H1 (cell line): ENCODE measurements at regions of chr5 and their contacts with region 1.

Region 1: GRCh38 chr5:50962934-50963872 is 296.8 kb downstream of the PARP8 start:
- DNase-seq: peak; percentile 56 to 93
- H3K4me3 ChIP-seq: peak overlapping the region; percentile 25 to 71 (median 54); a peak in 7 of 8 replicates
- H3K27ac ChIP-seq: no peak overlapping the region
- H3K4me1 ChIP-seq: peaks cover 0 to 18% (median 6%) of the 10 kb centered on the region in 4 experiments; a peak in 5 of 7 replicates
- H3K27me3 ChIP-seq: peaks cover 41 to 51% (median 46%) of the 10 kb centered on the region in 4 experiments
- CTCF ChIP-seq: peak; percentile 99
- EP300 ChIP-seq: no peak
- POLR2A ChIP-seq: no peak
- RAD21 ChIP-seq: peak; percentile 99 to 100

Region 2: GRCh38 chr5:51018423-51018822 is 55.2 kb after region 1 on chr5:
- CTCF ChIA-PET with region 1: no interaction called
- POLR2A ChIA-PET with region 1: no interaction called
- DNase-seq: no peak
- H3K4me3 ChIP-seq: no peak overlapping the region
- H3K27ac ChIP-seq: no peak overlapping the region
- H3K4me1 ChIP-seq: no peaks in the 10 kb centered on the region
- H3K27me3 ChIP-seq: no peaks in the 10 kb centered on the region
- CTCF ChIP-seq: no peak
- EP300 ChIP-seq: no peak
- POLR2A ChIP-seq: no peak
- RAD21 ChIP-seq: no peak

Region 3: GRCh38 chr5:51033215-51033614 is 70.0 kb after region 1 on chr5:
- CTCF ChIA-PET with region 1: no interaction called
- POLR2A ChIA-PET with region 1: no interaction called
- DNase-seq: no peak
- H3K4me3 ChIP-seq: no peak overlapping the region
- H3K27ac ChIP-seq: no peak overlapping the region
- H3K4me1 ChIP-seq: no peaks in the 10 kb centered on the region
- H3K27me3 ChIP-seq: no peaks in the 10 kb centered on the region
- CTCF ChIP-seq: no peak
- EP300 ChIP-seq: no peak
- POLR2A ChIP-seq: no peak
- RAD21 ChIP-seq: no peak

Region 4: DNA sequence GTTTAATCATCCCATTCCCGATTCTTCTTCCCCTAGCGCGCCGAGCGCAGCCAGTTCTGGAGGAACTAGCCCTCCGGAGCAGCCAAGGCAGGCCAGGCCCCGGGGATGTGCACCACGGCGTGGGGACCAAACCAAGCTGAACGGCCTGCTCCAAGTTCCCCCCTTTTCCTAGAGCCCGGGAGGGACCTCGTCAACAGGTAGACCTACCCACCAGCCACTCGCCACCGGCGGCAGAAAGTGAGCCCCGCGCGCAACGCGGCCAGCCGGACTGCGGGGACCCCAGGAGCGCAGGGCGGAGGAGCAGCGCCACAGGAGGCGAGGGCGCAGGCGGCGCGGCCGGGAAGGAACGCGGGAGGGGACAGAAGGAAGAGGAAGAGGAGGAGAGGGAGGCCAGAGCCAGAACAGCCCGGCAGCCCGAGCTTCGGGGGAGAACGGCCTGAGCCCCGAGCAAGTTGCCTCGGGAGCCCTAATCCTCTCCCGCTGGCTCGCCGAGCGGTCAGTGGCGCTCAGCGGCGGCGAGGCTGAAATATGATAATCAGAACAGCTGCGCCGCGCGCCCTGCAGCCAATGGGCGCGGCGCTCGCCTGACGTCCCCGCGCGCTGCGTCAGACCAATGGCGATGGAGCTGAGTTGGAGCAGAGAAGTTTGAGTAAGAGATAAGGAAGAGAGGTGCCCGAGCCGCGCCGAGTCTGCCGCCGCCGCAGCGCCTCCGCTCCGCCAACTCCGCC is 419.7 kb after region 1 on chr5 and contains the start of gene ISL1:
- CTCF ChIA-PET with region 1: interaction called, 113 read pairs
- POLR2A ChIA-PET with region 1: interaction called, 8 read pairs
- DNase-seq: peak in 1 of 2 experiments; percentile 88
- H3K4me3 ChIP-seq: peak within 1 kb of the TSS; percentile 37 to 66 (median 55)
- H3K27ac ChIP-seq: no peak within 1 kb of the TSS
- H3K4me1 ChIP-seq: peaks cover 10 to 48% (median 26%) of the 10 kb centered on the region in 4 experiments
- H3K27me3 ChIP-seq: peaks cover 47 to 99% (median 81%) of the 10 kb centered on the region in 4 experiments
- CTCF ChIP-seq: no peak
- EP300 ChIP-seq: no peak
- POLR2A ChIP-seq: peak in 1 of 2 experiments; percentile 47; a peak in 1 of 3 replicates
- RAD21 ChIP-seq: no peak
- total RNA-seq, gene ISL1: 0.19 TPM in 1 of 2 replicates, not detected in the other

Region 5: GRCh38 chr5:51398875-51399642 is 435.9 kb after region 1 on chr5:
- CTCF ChIA-PET with region 1: interaction called, 13 read pairs
- POLR2A ChIA-PET with region 1: no interaction called
- DNase-seq: no peak
- H3K4me3 ChIP-seq: peak overlapping the region; percentile 26 to 56 (median 44)
- H3K27ac ChIP-seq: no peak overlapping the region
- H3K4me1 ChIP-seq: peaks cover 5 to 18% (median 14%) of the 10 kb centered on the region in 4 experiments
- H3K27me3 ChIP-seq: peaks cover 49 to 68% (median 64%) of the 10 kb centered on the region in 4 experiments
- CTCF ChIP-seq: no peak
- EP300 ChIP-seq: no peak
- POLR2A ChIP-seq: no peak
- RAD21 ChIP-seq: no peak

Region 6: GRCh38 chr5:52007230-52007858 is 1044.1 kb after region 1 on chr5:
- CTCF ChIA-PET with region 1: interaction called, 20 read pairs
- POLR2A ChIA-PET with region 1: no interaction called
- DNase-seq: no peak
- H3K4me3 ChIP-seq: no peak overlapping the region
- H3K27ac ChIP-seq: no peak overlapping the region
- H3K4me1 ChIP-seq: no peaks in the 10 kb centered on the region; a peak in 1 of 7 replicates
- H3K27me3 ChIP-seq: no peaks in the 10 kb centered on the region
- CTCF ChIP-seq: peak in 2 of 3 experiments; percentile 79; a peak in 3 of 4 replicates
- EP300 ChIP-seq: no peak
- POLR2A ChIP-seq: no peak
- RAD21 ChIP-seq: peak; percentile 97 to 98